ENCODE measurements at regions of chr6 and their contacts with region 1.

Region 1: DNA sequence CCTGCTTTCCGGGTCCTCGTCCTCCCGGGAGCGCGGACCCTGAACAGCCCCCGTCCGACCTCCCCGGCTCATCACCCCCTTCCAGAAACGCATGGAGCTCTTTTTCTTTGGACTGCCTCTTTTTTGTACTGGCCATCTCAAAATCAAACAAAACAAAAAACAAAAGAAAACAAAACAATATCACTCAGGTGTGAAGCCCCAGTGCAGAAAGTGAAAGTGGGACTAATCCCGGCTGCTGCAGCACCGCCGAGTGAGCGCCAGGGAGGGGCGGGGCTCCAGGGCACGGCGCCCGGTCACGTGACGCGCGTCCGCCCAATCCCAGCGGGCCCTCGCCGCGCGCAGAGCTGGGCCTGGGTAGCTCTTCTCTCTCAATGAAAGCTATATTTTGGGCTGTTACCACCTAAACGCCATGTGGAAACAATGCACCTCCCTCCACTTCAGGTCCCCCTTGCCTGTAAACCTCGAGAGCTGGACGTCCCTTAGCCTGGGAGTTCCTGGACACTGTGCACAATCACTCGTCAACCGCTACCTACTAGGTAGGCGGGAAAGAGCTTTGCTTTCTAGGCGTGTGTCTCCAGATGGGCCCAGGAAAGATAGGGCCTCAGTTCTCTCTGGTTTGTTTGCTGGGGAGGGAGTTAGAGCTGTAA is 93.7 kb upstream of the PRDM1 start:
- DNase-seq: peak; percentile 93
- H3K4me3 ChIP-seq: peak overlapping the region; percentile 79
- H3K27ac ChIP-seq: peak overlapping the region; percentile 53
- H3K4me1 ChIP-seq: peaks cover 39% of the 10 kb centered on the region
- CTCF ChIP-seq: no peak

Region 2: GRCh38 chr6:105733565-105734162 is 258.8 kb before region 1 on chr6:
- CTCF ChIA-PET with region 1: interaction called, 5 read pairs
- POLR2A ChIA-PET with region 1: interaction called, 4 read pairs
- intact Hi-C with region 1: loop called (anchors 5 kb)
- DNase-seq: peak; percentile 73
- H3K4me3 ChIP-seq: no peak overlapping the region
- H3K27ac ChIP-seq: no peak overlapping the region
- H3K4me1 ChIP-seq: peaks cover 3% of the 10 kb centered on the region
- CTCF ChIP-seq: peak; percentile 99

Region 3: GRCh38 chr6:105793130-105793529 is 199.3 kb before region 1 on chr6:
- CTCF ChIA-PET with region 1: interaction called, 3 read pairs
- POLR2A ChIA-PET with region 1: interaction called, 3 read pairs
- intact Hi-C with region 1: loop called (anchors 5 kb)
- DNase-seq: peak; percentile 81
- H3K4me3 ChIP-seq: peak overlapping the region; percentile 2
- H3K27ac ChIP-seq: peak overlapping the region; percentile 35
- H3K4me1 ChIP-seq: peaks cover 56% of the 10 kb centered on the region
- CTCF ChIP-seq: peak; percentile 69

Region 4: GRCh38 chr6:105880030-105880492 is 112.4 kb before region 1 on chr6:
- CTCF ChIA-PET with region 1: interaction called, 3 read pairs
- POLR2A ChIA-PET with region 1: interaction called, 15 read pairs
- intact Hi-C with region 1: no loop called
- DNase-seq: peak; percentile 63
- H3K4me3 ChIP-seq: peak overlapping the region; percentile 43
- H3K27ac ChIP-seq: peak overlapping the region; percentile 21
- H3K4me1 ChIP-seq: peaks cover 92% of the 10 kb centered on the region
- CTCF ChIP-seq: no peak

Region 5: GRCh38 chr6:105967917-105968584 is 24.4 kb before region 1 on chr6:
- CTCF ChIA-PET with region 1: no interaction called
- POLR2A ChIA-PET with region 1: interaction called, 11 read pairs
- intact Hi-C with region 1: no loop called
- DNase-seq: no peak
- H3K4me3 ChIP-seq: no peak overlapping the region
- H3K27ac ChIP-seq: no peak overlapping the region
- H3K4me1 ChIP-seq: peaks cover 3% of the 10 kb centered on the region
- CTCF ChIP-seq: no peak

Region 6: GRCh38 chr6:106003268-106003987 is 11.0 kb after region 1 on chr6:
- CTCF ChIA-PET with region 1: no interaction called
- POLR2A ChIA-PET with region 1: interaction called, 28 read pairs
- intact Hi-C with region 1: no loop called
- DNase-seq: no peak
- H3K4me3 ChIP-seq: no peak overlapping the region
- H3K27ac ChIP-seq: no peak overlapping the region
- H3K4me1 ChIP-seq: no peaks in the 10 kb centered on the region
- CTCF ChIP-seq: no peak